ENCODE measurements at regions of chr1 and their contacts with region 1.

Region 1: GRCh38 chr1:66924756-66925557 is at the starts of genes DNAI4 and MIER1:
- DNase-seq: peak; percentile 99
- H3K4me3 Mint-ChIP-seq: peak within 1 kb of the TSS; percentile 91
- H3K27ac Mint-ChIP-seq: peak within 1 kb of the TSS; percentile 89
- H3K4me1 Mint-ChIP-seq: peaks cover 49% of the 10 kb centered on the region
- H3K27me3 Mint-ChIP-seq: no peaks in the 10 kb centered on the region
- total RNA-seq, gene DNAI4: 1.4 to 2.7 TPM
- total RNA-seq, gene MIER1: 61.7 to 62.0 TPM

Region 2: GRCh38 chr1:66563094-66563800 is 361.7 kb before region 1 on chr1:
- CTCF ChIA-PET with region 1: no interaction called
- POLR2A ChIA-PET with region 1: no interaction called
- DNase-seq: no peak
- H3K4me3 Mint-ChIP-seq: no peak overlapping the region
- H3K27ac Mint-ChIP-seq: no peak overlapping the region
- H3K4me1 Mint-ChIP-seq: no peaks in the 10 kb centered on the region
- H3K27me3 Mint-ChIP-seq: peaks cover 15% of the 10 kb centered on the region

Region 3: GRCh38 chr1:66764994-66765578 is 159.9 kb before region 1 on chr1:
- CTCF ChIA-PET with region 1: interaction called, 16 read pairs
- POLR2A ChIA-PET with region 1: interaction called, 10 read pairs
- DNase-seq: peak; percentile 54
- H3K4me3 Mint-ChIP-seq: no peak overlapping the region
- H3K27ac Mint-ChIP-seq: no peak overlapping the region
- H3K4me1 Mint-ChIP-seq: peaks cover 15% of the 10 kb centered on the region
- H3K27me3 Mint-ChIP-seq: peaks cover 9% of the 10 kb centered on the region

Measured in activated CD4-positive, alpha-beta memory T cell treated with anti-CD3 and anti-CD28 coated beads, Interleukin-2, amount 10 ng/mL, durations not matched to agents 7 days and 5 days (primary cell).